IMR-90 (cell line): ENCODE measurements at regions of chr5 and their contacts with region 1.

Region 1: GRCh38 chr5:57298295-57298984 is 124.6 kb downstream of the GPBP1 start:
- DNase-seq: peak; percentile 84
- ATAC-seq: peak; percentile 73
- H3K4me3 ChIP-seq: no peak overlapping the region
- H3K27ac ChIP-seq: peak overlapping the region; percentile 42; the same call in 1 of the 2 replicates
- H3K4me1 ChIP-seq: peaks cover 10% of the 10 kb centered on the region
- H3K27me3 ChIP-seq: 0 out of 2 replicates have a peak, but pooled peaks cover 2% of the 10 kb centered on the region
- CTCF ChIP-seq: peak; percentile 90
- POLR2A ChIP-seq: no peak
- RAD21 ChIP-seq: peak; percentile 91

Region 2: GRCh38 chr5:57258052-57258451 is 40.4 kb before region 1 on chr5:
- CTCF ChIA-PET with region 1: no interaction called
- POLR2A ChIA-PET with region 1: no interaction called
- dilution Hi-C with region 1: no loop called
- in situ Hi-C with region 1: no loop called
- intact Hi-C with region 1: no loop called
- DNase-seq: no peak
- ATAC-seq: no peak
- H3K4me3 ChIP-seq: no peak overlapping the region
- H3K27ac ChIP-seq: no peak overlapping the region
- H3K4me1 ChIP-seq: peaks cover 5% of the 10 kb centered on the region
- H3K27me3 ChIP-seq: no peaks in the 10 kb centered on the region
- CTCF ChIP-seq: no peak
- POLR2A ChIP-seq: no peak
- RAD21 ChIP-seq: no peak

Region 3: GRCh38 chr5:57494104-57495098 is 196.0 kb after region 1 on chr5:
- CTCF ChIA-PET with region 1: interaction called, 9 read pairs
- POLR2A ChIA-PET with region 1: no interaction called
- dilution Hi-C with region 1: no loop called
- in situ Hi-C with region 1: no loop called
- intact Hi-C with region 1: loop called (anchors 1 kb)
- DNase-seq: peak; percentile 98
- ATAC-seq: peak; percentile 97
- H3K4me3 ChIP-seq: no peak overlapping the region
- H3K27ac ChIP-seq: peak overlapping the region; percentile 88
- H3K4me1 ChIP-seq: peaks cover 16% of the 10 kb centered on the region
- H3K27me3 ChIP-seq: no peaks in the 10 kb centered on the region
- CTCF ChIP-seq: no peak
- POLR2A ChIP-seq: no peak
- RAD21 ChIP-seq: peak; percentile 43

Region 4: DNA sequence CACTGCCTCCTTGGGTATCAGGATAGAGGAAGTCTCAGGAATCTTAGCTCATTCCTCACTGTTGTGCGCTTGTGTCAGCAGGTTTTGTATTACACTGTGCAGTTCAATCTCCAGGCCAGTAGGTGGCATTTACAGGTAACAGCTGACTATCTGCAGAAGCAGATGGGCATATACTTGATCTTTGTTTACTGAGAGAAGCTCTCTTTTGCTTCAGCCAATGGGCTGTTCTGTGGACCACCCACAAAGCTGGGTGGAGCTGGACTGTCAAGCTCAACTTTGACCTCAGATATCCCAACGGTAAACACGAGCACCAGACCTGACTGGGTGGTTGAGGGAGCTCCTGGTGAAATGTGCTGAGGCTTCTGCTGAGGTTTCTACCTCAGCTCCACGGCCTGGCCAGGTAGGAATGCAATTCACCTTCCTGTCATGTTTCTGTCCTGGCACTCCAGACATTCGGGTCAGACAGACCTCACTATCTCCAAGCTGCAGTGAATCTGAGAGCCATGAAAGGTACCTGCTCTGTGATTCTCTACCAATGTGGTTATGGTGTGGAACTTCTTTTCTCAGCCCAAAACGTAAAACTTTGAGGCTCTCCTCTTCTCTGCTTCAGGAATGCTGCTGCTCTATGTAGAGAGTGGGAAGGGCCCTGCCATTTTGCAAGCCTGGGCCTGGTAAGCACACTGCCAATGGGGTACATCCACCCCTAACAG is 352.1 kb after region 1 on chr5:
- CTCF ChIA-PET with region 1: interaction called, 4 read pairs
- POLR2A ChIA-PET with region 1: no interaction called
- dilution Hi-C with region 1: no loop called
- in situ Hi-C with region 1: no loop called
- intact Hi-C with region 1: loop called (anchors 10 kb)
- DNase-seq: peak; percentile 53
- ATAC-seq: peak; percentile 86
- H3K4me3 ChIP-seq: no peak overlapping the region
- H3K27ac ChIP-seq: no peak overlapping the region
- H3K4me1 ChIP-seq: no peaks in the 10 kb centered on the region
- H3K27me3 ChIP-seq: no peaks in the 10 kb centered on the region
- CTCF ChIP-seq: peak; percentile 55
- POLR2A ChIP-seq: no peak
- RAD21 ChIP-seq: peak; percentile 66

Region 5: GRCh38 chr5:57887851-57888621 is 589.6 kb after region 1 on chr5:
- CTCF ChIA-PET with region 1: no interaction called
- POLR2A ChIA-PET with region 1: no interaction called
- dilution Hi-C with region 1: no loop called
- in situ Hi-C with region 1: no loop called
- intact Hi-C with region 1: loop called (anchors 1 kb)
- DNase-seq: peak; percentile 69
- ATAC-seq: peak; percentile 83
- H3K4me3 ChIP-seq: no peak overlapping the region
- H3K27ac ChIP-seq: no peak overlapping the region
- H3K4me1 ChIP-seq: peaks cover 7% of the 10 kb centered on the region
- H3K27me3 ChIP-seq: no peaks in the 10 kb centered on the region
- CTCF ChIP-seq: peak; percentile 63
- POLR2A ChIP-seq: no peak
- RAD21 ChIP-seq: peak; percentile 80

Region 6: DNA sequence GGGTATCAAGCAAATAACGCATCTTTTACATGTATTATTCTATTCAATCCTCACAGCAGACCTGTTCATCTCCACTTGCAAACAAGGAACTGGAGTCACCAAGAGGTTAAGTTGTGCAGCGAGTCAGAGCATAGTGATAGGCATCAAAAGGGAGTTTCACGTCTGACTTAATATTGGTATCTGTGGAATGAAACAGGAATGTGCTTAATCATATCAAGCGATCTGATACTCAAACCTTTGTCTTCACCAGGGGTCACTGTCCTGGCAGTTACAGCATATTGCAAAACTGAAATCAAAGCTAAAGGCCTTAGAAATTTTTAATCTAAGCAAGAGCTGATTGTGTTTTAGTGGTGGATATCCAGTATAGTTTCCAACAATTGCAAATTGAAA is 889.8 kb after region 1 on chr5:
- CTCF ChIA-PET with region 1: no interaction called
- POLR2A ChIA-PET with region 1: no interaction called
- dilution Hi-C with region 1: no loop called
- in situ Hi-C with region 1: no loop called
- intact Hi-C with region 1: loop called (anchors 5 kb)
- DNase-seq: peak; percentile 70
- ATAC-seq: peak; percentile 83
- H3K4me3 ChIP-seq: no peak overlapping the region
- H3K27ac ChIP-seq: no peak overlapping the region
- H3K4me1 ChIP-seq: peaks cover 3% of the 10 kb centered on the region
- H3K27me3 ChIP-seq: no peaks in the 10 kb centered on the region
- CTCF ChIP-seq: no peak
- POLR2A ChIP-seq: no peak
- RAD21 ChIP-seq: no peak